CD8-positive, alpha-beta memory T cell (primary cell): ENCODE measurements at regions of chr11 and their contacts with region 1.

Region 1: GRCh38 chr11:128848815-128849455 is 18.2 kb downstream of the KCNJ1 start:
- DNase-seq: peak; percentile 33 to 77 (median 60)
- H3K4me3 ChIP-seq: no peak overlapping the region
- H3K4me3 Mint-ChIP-seq: peak overlapping the region in 1 of 7 donors; percentile 12
- H3K27ac ChIP-seq: no peak overlapping the region
- H3K27ac Mint-ChIP-seq: peak overlapping the region in 2 of 8 donors; percentile 40
- H3K4me1 ChIP-seq: peaks cover 27% of the 10 kb centered on the region
- H3K4me1 Mint-ChIP-seq: peaks cover 19 to 43% (median 38%) of the 10 kb centered on the region in 3 donors
- H3K27me3 ChIP-seq: no peaks in the 10 kb centered on the region
- H3K27me3 Mint-ChIP-seq: peaks cover 0 to 4% of the 10 kb centered on the region in 2 donors

Region 2: DNA sequence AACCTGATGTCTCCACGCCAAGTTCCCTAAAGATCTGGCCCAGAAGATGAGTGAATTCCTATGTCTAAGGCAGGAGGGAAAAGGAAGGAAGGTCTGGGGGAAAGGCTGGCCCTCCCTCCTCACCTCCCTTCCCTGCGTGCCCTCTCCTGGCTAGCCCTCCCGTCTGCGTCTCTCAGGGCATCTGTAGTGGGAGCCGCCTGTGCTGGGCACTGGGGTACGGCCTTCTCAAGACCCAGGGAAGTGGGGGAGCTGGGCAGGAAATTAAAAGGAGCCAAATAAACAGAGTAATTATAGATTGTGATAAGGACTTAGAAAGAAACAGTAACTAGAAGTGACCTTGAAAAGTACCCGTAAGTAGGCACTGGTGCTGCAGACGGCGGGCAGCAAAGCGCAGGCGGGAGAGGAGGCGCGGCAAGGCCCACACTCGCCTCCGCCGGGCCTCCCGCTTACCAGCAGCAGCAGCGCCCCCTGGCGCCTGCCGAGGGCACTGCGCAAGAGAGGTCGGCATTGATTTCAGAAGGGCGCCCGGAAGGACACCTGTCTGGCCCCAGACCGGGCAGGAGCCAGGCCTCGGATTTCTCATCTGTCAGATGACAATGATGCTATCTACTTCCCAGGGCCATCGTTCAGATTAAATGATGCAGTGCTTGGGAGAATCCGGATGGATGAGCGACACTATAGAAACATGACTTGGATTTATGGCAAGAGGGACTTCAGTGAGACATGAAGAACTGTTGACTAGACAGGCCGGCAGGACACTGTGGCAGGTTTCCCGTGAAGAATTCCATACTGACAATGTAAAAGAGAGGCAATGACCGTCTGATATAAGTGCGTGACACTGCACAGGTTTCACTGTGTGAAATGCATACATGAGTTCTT is 10.9 kb after region 1 on chr11:
- CTCF ChIA-PET with region 1: interaction called, 26 read pairs
- POLR2A ChIA-PET with region 1: no interaction called
- DNase-seq: peak; percentile 55 to 82 (median 66)
- H3K4me3 ChIP-seq: no peak overlapping the region
- H3K4me3 Mint-ChIP-seq: peak overlapping the region in 1 of 7 donors; percentile 33
- H3K27ac ChIP-seq: no peak overlapping the region
- H3K27ac Mint-ChIP-seq: peak overlapping the region in 1 of 8 donors; percentile 17
- H3K4me1 ChIP-seq: no peaks in the 10 kb centered on the region
- H3K4me1 Mint-ChIP-seq: peaks cover 3 to 9% (median 8%) of the 10 kb centered on the region in 3 donors
- H3K27me3 ChIP-seq: no peaks in the 10 kb centered on the region
- H3K27me3 Mint-ChIP-seq: peaks cover 4 to 7% of the 10 kb centered on the region in 2 donors

Region 3: GRCh38 chr11:128878455-128878854 is 29.5 kb after region 1 on chr11:
- CTCF ChIA-PET with region 1: no interaction called
- POLR2A ChIA-PET with region 1: no interaction called
- DNase-seq: no peak
- H3K4me3 ChIP-seq: no peak overlapping the region
- H3K4me3 Mint-ChIP-seq: no peak overlapping the region
- H3K27ac ChIP-seq: no peak overlapping the region
- H3K27ac Mint-ChIP-seq: no peak overlapping the region
- H3K4me1 ChIP-seq: no peaks in the 10 kb centered on the region
- H3K4me1 Mint-ChIP-seq: no peaks in the 10 kb centered on the region
- H3K27me3 ChIP-seq: peaks cover 3% of the 10 kb centered on the region
- H3K27me3 Mint-ChIP-seq: peaks cover 5 to 48% of the 10 kb centered on the region in 2 donors